IMR-90 (cell line): ENCODE measurements at regions of chrX and their contacts with region 1.

Region 1: DNA sequence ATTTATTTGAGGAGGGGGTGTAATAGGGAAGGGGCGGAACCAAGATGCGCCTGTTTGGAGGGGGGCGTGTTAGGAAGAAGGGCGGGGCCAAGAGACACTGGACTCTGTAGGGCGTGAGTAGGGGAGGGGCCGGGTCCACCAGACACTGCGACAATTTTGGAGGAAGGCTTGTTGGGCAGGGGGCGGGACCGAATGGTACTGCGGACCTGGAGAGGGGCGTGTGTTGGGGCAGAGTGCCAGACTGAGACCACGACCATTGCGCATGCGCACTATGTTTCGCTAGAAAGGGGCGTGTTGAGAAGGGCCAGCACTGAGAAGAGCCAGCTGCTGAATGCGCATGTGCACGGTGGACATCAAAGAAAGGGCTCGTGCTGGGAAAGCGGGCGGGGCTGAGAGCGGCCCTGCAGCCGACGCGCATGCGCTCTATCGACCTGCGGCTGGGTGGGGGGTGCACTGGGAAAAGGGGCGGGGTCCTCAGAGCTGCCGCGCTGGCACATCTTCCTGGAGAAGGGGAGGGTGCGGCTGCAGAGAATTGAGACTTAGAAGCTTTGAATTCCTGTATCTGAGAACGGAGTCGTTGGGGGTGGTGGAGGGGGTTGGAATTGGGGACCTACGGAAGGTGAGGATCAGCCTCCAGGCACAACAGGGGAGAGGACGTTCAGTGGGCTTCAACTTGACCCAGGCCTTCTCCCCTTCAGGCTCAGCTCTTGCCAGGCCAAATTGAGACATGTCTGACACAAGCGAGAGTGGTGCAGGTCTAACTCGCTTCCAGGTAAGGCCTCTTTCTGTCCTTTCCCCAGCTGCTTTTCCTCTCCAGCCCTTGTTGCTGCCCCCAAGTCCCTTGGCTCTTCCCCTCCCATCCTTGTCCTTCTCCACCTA is 1.3 kb downstream of the MAGED2 start:
- DNase-seq: peak; percentile 96
- ATAC-seq: peak; percentile 92
- H3K4me3 ChIP-seq: peak overlapping the region; percentile 84
- H3K27ac ChIP-seq: peak overlapping the region; percentile 90
- H3K4me1 ChIP-seq: peaks cover 7% of the 10 kb centered on the region; the same call in 1 of the 2 replicates
- H3K27me3 ChIP-seq: peaks cover 8% of the 10 kb centered on the region; the same call in 1 of the 2 replicates
- CTCF ChIP-seq: no peak
- POLR2A ChIP-seq: no peak
- RAD21 ChIP-seq: no peak

Region 2: DNA sequence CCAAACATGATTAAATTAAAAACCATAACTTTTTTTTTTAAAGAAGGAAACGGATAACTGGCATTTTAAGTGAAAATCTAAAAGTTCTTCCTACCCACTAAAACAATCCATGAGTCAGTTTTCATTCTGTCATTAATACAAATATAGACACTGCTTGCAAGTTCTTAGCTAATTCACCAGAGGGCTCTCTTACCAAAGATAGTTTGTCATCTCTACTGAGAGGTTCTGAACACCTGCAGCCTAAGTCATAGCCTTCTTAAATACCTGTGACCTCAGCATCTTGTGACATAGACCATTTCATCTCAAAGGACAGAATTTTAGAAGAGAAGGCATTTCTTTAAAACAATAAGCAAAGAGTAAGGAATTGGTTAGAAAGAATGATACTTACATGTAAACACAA is 560.5 kb before region 1 on chrX:
- CTCF ChIA-PET with region 1: no interaction called
- POLR2A ChIA-PET with region 1: no interaction called
- dilution Hi-C with region 1: no loop called
- in situ Hi-C with region 1: no loop called
- intact Hi-C with region 1: loop called (anchors 10 kb)
- DNase-seq: peak; percentile 44
- ATAC-seq: no peak
- H3K4me3 ChIP-seq: no peak overlapping the region
- H3K27ac ChIP-seq: no peak overlapping the region
- H3K4me1 ChIP-seq: no peaks in the 10 kb centered on the region
- H3K27me3 ChIP-seq: peaks cover 2% of the 10 kb centered on the region; the same call in 1 of the 2 replicates
- CTCF ChIP-seq: peak; percentile 36
- POLR2A ChIP-seq: no peak
- RAD21 ChIP-seq: peak; percentile 40

Region 3: GRCh38 chrX:54271664-54272063 is 537.2 kb before region 1 on chrX:
- CTCF ChIA-PET with region 1: no interaction called
- POLR2A ChIA-PET with region 1: no interaction called
- dilution Hi-C with region 1: no loop called
- in situ Hi-C with region 1: no loop called
- intact Hi-C with region 1: no loop called
- DNase-seq: no peak
- ATAC-seq: no peak
- H3K4me3 ChIP-seq: no peak overlapping the region
- H3K27ac ChIP-seq: no peak overlapping the region
- H3K4me1 ChIP-seq: no peaks in the 10 kb centered on the region
- H3K27me3 ChIP-seq: no peaks in the 10 kb centered on the region
- CTCF ChIP-seq: no peak
- POLR2A ChIP-seq: no peak
- RAD21 ChIP-seq: no peak

Region 4: DNA sequence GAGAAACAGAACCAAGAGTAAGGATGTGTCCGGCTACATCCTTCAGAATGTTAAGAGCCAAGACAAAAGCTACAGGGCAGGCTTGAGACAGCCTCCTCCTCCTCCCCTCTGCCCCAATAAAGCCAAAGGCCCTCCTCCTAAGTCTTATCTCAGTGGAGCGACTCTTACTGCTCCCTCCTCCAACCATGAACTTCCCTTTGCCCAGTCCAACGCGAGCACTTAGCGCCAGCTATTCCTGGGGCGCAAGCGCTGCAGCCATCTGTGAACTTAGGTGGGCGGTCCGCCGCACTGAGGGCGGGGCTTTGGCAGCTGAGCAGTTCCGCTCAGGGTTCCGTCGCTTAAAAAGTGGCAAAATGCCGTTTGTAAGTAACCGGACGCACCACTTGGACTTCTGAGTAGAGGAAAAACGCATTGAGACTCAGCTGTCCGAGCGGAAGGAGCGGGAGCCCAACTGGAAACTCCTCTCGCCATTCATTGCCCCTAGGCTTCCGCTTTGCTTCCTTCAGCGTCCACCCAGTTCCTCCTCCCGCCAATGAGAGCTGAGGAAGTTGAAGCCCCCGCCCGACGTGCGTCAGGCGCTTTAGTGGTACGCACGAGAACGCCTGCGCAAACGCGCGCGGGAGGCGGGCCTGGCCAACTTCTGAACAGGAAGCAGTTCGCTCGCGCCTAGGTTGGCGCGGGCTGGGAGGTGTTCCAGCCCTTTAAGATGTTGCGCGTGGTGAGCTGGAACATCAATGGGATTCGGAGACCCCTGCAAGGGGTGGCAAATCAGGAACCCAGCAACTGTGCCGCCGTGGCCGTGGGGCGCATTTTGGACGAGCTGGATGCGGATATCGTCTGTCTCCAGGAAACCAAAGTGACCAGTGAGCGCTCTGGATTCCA is 191.1 kb after region 1 on chrX and contains the start of gene APEX2:
- CTCF ChIA-PET with region 1: no interaction called
- POLR2A ChIA-PET with region 1: no interaction called
- dilution Hi-C with region 1: no loop called
- in situ Hi-C with region 1: no loop called
- intact Hi-C with region 1: loop called (anchors 1 kb)
- DNase-seq: peak; percentile 91
- ATAC-seq: peak; percentile 97
- H3K4me3 ChIP-seq: peak within 1 kb of the TSS; percentile 94
- H3K27ac ChIP-seq: peak within 1 kb of the TSS; percentile 91
- H3K4me1 ChIP-seq: no peaks in the 10 kb centered on the region
- H3K27me3 ChIP-seq: peaks cover 4% of the 10 kb centered on the region
- CTCF ChIP-seq: no peak
- POLR2A ChIP-seq: peak; percentile 85
- RAD21 ChIP-seq: no peak
- total RNA-seq, gene APEX2: 3.4 and 4.2 TPM in 2 replicates

Region 5: DNA sequence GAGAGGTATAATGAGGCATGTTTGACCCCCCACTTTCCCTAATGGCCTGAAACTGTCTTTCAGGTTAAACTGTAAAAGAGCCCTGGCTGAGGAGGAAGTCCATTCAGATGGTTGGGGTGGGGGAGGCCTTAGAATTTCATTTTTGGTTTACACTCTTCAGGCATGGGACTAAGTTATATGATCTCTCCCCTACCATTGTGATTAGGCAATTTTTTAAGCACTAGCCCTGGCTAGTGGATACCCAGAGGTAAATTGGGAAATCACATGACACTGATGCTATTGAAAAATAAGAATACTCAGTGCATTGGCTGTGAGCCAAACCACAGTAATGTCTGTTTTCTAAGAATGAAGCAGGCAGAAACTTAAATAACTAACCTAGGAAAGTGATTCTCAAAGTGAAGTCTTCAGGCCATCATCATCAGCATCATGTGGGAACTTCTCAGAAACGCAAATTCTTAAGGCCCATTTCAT is 1058.4 kb after region 1 on chrX:
- CTCF ChIA-PET with region 1: no interaction called
- POLR2A ChIA-PET with region 1: interaction called, 11 read pairs
- dilution Hi-C with region 1: no loop called
- in situ Hi-C with region 1: no loop called
- intact Hi-C with region 1: no loop called
- DNase-seq: peak; percentile 2
- ATAC-seq: no peak
- H3K4me3 ChIP-seq: no peak overlapping the region
- H3K27ac ChIP-seq: no peak overlapping the region
- H3K4me1 ChIP-seq: no peaks in the 10 kb centered on the region
- H3K27me3 ChIP-seq: no peaks in the 10 kb centered on the region
- CTCF ChIP-seq: no peak
- POLR2A ChIP-seq: no peak
- RAD21 ChIP-seq: no peak